Ovary (tissue), 10 donors: ENCODE measurements at regions of chr2 and their contacts with region 1.

Region 1: DNA sequence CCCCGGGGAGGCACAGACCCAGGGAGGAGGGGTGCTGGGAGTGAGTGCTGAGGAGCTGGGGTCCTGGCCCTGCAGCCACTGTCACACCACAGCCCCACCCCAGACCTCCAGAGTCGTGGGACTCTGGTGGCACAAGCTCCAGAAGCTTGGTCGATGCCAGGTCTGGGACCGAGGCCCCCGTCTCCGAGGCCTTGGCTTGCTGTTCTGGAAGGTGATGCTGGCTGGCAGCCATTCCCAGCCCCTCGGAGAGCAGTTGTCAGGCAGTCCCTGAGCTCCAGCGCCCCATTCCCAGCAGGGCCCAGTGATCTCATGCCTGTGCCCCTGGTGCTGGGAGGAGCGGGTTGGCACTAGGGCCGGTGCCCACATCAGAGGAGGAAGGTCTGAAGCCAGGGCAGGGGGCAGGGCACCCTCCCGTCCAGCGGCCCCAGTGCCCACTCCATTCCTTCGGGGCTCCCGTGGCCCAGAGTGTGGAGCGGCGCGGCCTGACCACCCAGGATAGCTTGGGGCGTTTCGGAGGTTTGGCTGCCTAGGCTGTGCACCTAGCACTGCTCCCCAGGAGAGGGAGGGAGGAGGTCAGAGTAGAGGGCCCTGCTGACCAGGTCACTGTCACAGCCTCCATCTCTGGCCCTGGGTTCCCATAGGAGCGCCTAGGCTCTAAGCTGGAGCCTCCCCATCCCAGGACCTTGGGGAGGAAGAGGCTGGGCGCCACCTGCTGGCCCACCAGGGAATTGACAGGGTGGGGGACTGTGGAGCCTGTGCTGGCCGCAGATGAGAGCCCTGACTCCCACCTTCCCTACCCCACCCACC is 16.8 kb upstream of the ALPI start:
- DNase-seq: peak in 2 of 5 donors; percentile 41 to 57
- H3K4me3 ChIP-seq: no peak overlapping the region
- H3K27ac ChIP-seq: no peak overlapping the region
- H3K4me1 ChIP-seq: peaks cover 3% of the 10 kb centered on the region
- H3K27me3 ChIP-seq: no peaks in the 10 kb centered on the region
- CTCF ChIP-seq: peak in 2 of 3 donors; percentile 25 to 50
- EP300 ChIP-seq: no peak
- POLR2A ChIP-seq: no peak

Region 2: DNA sequence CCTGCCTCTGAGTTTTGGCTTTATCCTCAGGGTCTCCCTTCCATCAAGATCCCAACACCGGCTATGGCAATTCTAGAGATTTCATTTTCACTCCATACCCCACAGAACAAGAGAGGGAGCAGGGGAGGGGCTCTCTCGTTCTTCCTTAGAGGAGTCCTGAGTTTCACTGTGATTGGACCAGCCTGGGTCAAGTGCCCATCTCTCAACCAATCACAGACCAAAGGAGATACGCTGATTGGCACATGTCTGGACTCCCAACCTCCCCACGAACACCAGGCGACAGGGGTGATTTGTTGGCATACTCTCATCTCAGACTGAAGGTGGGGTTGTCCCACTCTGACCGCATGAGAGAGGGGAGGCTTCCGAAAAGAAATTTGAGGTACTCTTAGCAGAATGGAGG is 577.6 kb before region 1 on chr2:
- intact Hi-C with region 1: no loop called
- DNase-seq: no peak
- H3K4me3 ChIP-seq: no peak overlapping the region
- H3K27ac ChIP-seq: no peak overlapping the region
- H3K4me1 ChIP-seq: no peaks in the 10 kb centered on the region
- H3K27me3 ChIP-seq: no peaks in the 10 kb centered on the region
- CTCF ChIP-seq: no peak
- EP300 ChIP-seq: no peak
- POLR2A ChIP-seq: no peak

Region 3: GRCh38 chr2:231905026-231905425 is 534.1 kb before region 1 on chr2:
- intact Hi-C with region 1: loop called in 3 of 4 experiments (anchors 5 kb)
- DNase-seq: no peak
- H3K4me3 ChIP-seq: no peak overlapping the region
- H3K27ac ChIP-seq: no peak overlapping the region
- H3K4me1 ChIP-seq: no peaks in the 10 kb centered on the region
- H3K27me3 ChIP-seq: no peaks in the 10 kb centered on the region
- CTCF ChIP-seq: no peak
- EP300 ChIP-seq: no peak
- POLR2A ChIP-seq: no peak